ENCODE measurements at regions of chr19 and their contacts with region 1.

Region 1: GRCh38 chr19:15379083-15379995 is at the start of gene AKAP8:
- DNase-seq: peak; percentile 95 to 100 (median 98)
- ATAC-seq: peak; percentile 88
- H3K4me3 ChIP-seq: peak within 1 kb of the TSS; percentile 92 to 96
- H3K4me3 Mint-ChIP-seq: peak within 1 kb of the TSS; percentile 94
- H3K27ac ChIP-seq: peak within 1 kb of the TSS; percentile 98 to 99
- H3K27ac Mint-ChIP-seq: peak within 1 kb of the TSS; percentile 98
- H3K4me1 ChIP-seq: peaks cover 36% of the 10 kb centered on the region
- H3K4me1 Mint-ChIP-seq: peaks cover 40% of the 10 kb centered on the region
- H3K27me3 ChIP-seq: no peaks in the 10 kb centered on the region
- H3K27me3 Mint-ChIP-seq: no peaks in the 10 kb centered on the region
- CTCF ChIP-seq: no peak
- total RNA-seq, gene AKAP8: 97.4 to 109 TPM

Region 2: DNA sequence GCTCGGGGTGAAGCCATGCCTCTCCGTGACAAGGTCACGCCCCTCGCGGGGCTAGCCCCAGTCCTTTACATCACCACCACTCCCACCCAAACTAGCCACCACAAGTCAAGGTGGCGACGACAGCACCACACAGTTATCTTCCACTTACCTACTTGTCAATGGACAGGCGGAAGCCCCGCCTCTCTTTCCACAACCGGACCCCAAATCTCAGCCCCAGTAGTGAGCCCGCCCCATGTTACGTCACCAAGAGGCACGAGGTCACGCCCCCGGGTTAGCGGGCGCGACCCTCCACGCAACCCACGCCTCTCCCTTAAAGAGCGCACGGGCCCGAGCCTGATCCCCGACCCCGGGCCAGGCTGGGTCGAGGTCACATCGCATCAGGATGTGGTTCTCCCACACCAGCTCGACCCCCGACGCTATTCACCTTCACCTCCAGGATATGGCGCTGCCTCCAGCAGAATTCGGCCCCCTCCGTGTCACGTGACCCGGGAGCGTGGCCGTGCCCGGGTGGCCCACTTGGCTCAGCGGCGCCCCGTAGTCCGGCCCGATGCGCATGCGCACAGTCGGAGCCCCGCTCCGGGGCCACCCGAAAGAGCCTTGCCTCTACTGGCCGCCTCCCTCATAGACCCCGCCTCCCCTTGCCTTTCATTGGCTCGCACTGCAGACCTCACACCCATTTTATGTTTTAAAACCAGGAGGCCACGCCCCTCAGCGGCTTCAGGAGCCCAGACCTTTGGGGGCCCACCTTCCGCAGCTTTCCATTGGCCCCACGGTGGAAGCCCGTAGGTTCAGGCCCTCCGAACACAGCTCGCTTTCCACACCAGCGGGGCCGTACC is 253.9 kb before region 1 on chr19:
- CTCF ChIA-PET with region 1: no interaction called
- POLR2A ChIA-PET with region 1: interaction called, 4 read pairs
- intact Hi-C with region 1: loop called (anchors 1 kb)
- DNase-seq: peak; percentile 94 to 99 (median 97)
- ATAC-seq: peak; percentile 85
- H3K4me3 ChIP-seq: peak overlapping the region; percentile 98 to 99
- H3K4me3 Mint-ChIP-seq: peak overlapping the region; percentile 99
- H3K27ac ChIP-seq: peak overlapping the region; percentile 91 to 98
- H3K27ac Mint-ChIP-seq: peak overlapping the region; percentile 98
- H3K4me1 ChIP-seq: peaks cover 34% of the 10 kb centered on the region
- H3K4me1 Mint-ChIP-seq: peaks cover 47% of the 10 kb centered on the region
- H3K27me3 ChIP-seq: no peaks in the 10 kb centered on the region
- H3K27me3 Mint-ChIP-seq: no peaks in the 10 kb centered on the region
- CTCF ChIP-seq: no peak

Region 3: GRCh38 chr19:15264061-15264932 is 115.0 kb before region 1 on chr19:
- CTCF ChIA-PET with region 1: interaction called, 4 read pairs
- POLR2A ChIA-PET with region 1: no interaction called
- intact Hi-C with region 1: loop called (anchors 1 to 2 kb)
- DNase-seq: peak; percentile 46 to 82 (median 72)
- ATAC-seq: peak; percentile 71
- H3K4me3 ChIP-seq: no peak overlapping the region
- H3K4me3 Mint-ChIP-seq: no peak overlapping the region
- H3K27ac ChIP-seq: no peak overlapping the region
- H3K27ac Mint-ChIP-seq: no peak overlapping the region
- H3K4me1 ChIP-seq: no peaks in the 10 kb centered on the region
- H3K4me1 Mint-ChIP-seq: peaks cover 3% of the 10 kb centered on the region
- H3K27me3 ChIP-seq: no peaks in the 10 kb centered on the region
- H3K27me3 Mint-ChIP-seq: no peaks in the 10 kb centered on the region
- CTCF ChIP-seq: peak; percentile 70

Region 4: DNA sequence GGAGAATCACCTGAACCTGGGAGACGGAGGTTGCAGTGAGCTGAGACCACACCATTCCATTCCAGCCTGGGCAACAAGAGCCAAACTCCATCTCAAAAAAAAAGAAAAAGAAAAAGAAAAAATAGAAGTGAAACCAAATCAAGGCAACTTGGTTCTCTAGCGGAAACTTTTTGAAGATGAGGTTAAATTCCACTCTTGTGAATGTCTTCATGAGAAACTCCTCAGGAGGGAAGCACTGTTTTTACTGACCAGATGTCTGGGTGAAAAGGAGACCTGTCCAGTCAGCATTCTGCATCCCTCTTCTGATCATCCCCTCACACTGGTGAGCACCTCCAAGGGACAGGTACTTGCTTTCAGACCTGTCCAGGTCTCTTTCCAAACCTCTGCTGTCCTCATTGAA is 62.8 kb before region 1 on chr19:
- CTCF ChIA-PET with region 1: no interaction called
- POLR2A ChIA-PET with region 1: no interaction called
- intact Hi-C with region 1: no loop called
- DNase-seq: no peak
- ATAC-seq: no peak
- H3K4me3 ChIP-seq: no peak overlapping the region
- H3K4me3 Mint-ChIP-seq: peak overlapping the region; percentile 63
- H3K27ac ChIP-seq: no peak overlapping the region
- H3K27ac Mint-ChIP-seq: peak overlapping the region; percentile 84
- H3K4me1 ChIP-seq: peaks cover 83% of the 10 kb centered on the region
- H3K4me1 Mint-ChIP-seq: peaks cover 84% of the 10 kb centered on the region
- H3K27me3 ChIP-seq: no peaks in the 10 kb centered on the region
- H3K27me3 Mint-ChIP-seq: no peaks in the 10 kb centered on the region
- CTCF ChIP-seq: no peak

Region 5: GRCh38 chr19:15432629-15433518 is 53.5 kb after region 1 on chr19:
- CTCF ChIA-PET with region 1: no interaction called
- POLR2A ChIA-PET with region 1: interaction called, 14 read pairs
- intact Hi-C with region 1: loop called (anchors 1 kb)
- DNase-seq: peak; percentile 85 to 96 (median 91)
- ATAC-seq: peak; percentile 95
- H3K4me3 ChIP-seq: peak overlapping the region; percentile 88 to 100
- H3K4me3 Mint-ChIP-seq: peak overlapping the region; percentile 89
- H3K27ac ChIP-seq: peak overlapping the region; percentile 76 to 79
- H3K27ac Mint-ChIP-seq: peak overlapping the region; percentile 87
- H3K4me1 ChIP-seq: peaks cover 31% of the 10 kb centered on the region
- H3K4me1 Mint-ChIP-seq: peaks cover 26% of the 10 kb centered on the region
- H3K27me3 ChIP-seq: no peaks in the 10 kb centered on the region
- H3K27me3 Mint-ChIP-seq: no peaks in the 10 kb centered on the region
- CTCF ChIP-seq: no peak

Region 6: DNA sequence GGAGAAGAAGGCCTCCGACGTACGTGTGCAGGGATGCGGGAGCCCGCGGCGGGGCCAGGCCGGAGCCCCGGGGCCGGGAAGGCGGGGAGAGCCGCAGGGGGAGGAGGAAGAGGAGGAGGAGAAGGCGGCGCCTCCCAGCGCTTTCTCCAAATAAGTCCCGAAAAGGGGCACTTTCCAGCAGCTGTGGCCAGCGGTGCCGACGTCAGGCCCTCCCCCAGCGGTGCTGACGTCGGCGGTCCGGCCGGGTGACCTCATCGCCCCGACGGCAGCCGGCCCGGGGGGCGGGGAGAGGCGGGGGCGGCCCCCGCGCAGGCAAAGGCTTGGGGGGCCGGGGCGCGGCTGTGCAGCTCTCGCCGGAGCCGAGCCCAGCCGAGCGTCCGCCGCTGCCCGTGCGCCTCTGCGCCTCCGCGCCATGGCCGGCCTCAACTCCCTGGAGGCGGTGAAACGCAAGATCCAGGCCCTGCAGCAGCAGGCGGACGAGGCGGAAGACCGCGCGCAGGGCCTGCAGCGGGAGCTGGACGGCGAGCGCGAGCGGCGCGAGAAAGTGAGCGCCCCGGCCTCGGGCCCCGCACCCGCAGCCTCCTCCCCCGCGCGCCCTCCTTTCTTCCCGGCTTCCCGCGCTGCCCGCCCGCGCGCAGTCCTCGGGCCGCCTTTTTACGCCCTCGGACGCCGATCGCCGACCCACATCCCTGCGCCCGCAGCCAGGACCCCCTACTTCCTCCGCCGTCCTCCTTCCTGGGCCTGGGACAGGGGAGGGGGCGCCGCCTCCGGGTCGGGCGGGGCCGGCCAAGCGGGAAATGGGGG is 697.0 kb after region 1 on chr19 and contains the start of gene TPM4:
- CTCF ChIA-PET with region 1: no interaction called
- POLR2A ChIA-PET with region 1: no interaction called
- intact Hi-C with region 1: loop called in 1 of 2 experiments (anchors 2 kb)
- DNase-seq: peak; percentile 57 to 94 (median 81)
- ATAC-seq: peak; percentile 48
- H3K4me3 ChIP-seq: peak within 1 kb of the TSS; percentile 59 to 79
- H3K4me3 Mint-ChIP-seq: peak within 1 kb of the TSS; percentile 79
- H3K27ac ChIP-seq: peak within 1 kb of the TSS; percentile 64 to 92
- H3K27ac Mint-ChIP-seq: peak within 1 kb of the TSS; percentile 96
- H3K4me1 ChIP-seq: peaks cover 81% of the 10 kb centered on the region
- H3K4me1 Mint-ChIP-seq: peaks cover 74% of the 10 kb centered on the region
- H3K27me3 ChIP-seq: no peaks in the 10 kb centered on the region
- H3K27me3 Mint-ChIP-seq: no peaks in the 10 kb centered on the region
- CTCF ChIP-seq: no peak
- total RNA-seq, gene TPM4: 187 to 199 TPM

Region 7: DNA sequence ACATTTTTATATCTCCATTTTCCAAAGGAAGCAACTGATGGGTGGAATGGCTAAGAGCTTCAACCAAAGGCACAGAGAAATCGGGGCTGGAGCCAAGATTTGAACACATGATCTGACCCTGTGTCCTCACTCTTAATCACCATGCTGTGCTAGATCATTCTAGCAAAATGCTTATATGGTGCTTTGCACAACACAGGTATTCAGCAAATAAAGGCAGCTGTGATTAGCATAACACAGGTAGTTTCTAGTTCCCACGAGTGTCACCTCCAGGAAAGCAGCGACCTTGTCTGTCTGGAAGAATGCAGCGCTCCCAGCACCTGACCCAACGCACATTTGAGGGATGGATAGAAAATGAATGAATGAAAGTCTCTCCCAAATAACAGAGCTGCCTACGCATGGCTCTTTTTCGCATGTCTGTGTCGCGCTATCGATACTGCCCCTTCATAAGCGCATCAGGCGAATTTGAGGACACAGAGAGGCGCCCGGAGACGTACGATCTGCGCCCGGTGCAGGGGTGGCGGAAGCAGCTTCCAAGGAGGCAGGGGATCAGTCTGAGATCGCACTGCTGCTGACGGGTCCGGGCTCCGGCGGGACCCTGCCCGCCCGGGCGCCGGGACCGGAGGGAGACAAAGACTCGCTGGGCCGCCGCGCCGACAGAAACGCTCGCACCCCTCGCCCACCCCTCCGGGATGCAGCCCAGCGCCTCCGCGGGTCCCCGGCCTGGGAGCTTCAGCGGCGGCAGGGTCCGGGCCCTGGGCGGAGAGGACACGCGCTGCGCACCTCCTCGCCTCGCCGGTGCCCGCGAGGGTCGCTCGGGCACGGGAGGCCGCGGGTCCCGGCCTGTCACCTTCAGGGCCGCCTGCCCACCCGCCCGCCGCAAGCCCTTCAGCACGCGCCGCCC is 1091.8 kb after region 1 on chr19:
- CTCF ChIA-PET with region 1: no interaction called
- POLR2A ChIA-PET with region 1: no interaction called
- intact Hi-C with region 1: no loop called
- DNase-seq: peak in 4 of 9 experiments; percentile 20 to 54 (median 39)
- ATAC-seq: peak; percentile 9
- H3K4me3 ChIP-seq: peak overlapping the region; percentile 50 to 69
- H3K4me3 Mint-ChIP-seq: peak overlapping the region; percentile 88
- H3K27ac ChIP-seq: peak overlapping the region in 1 of 2 experiments; percentile 33
- H3K27ac Mint-ChIP-seq: peak overlapping the region; percentile 57
- H3K4me1 ChIP-seq: peaks cover 21% of the 10 kb centered on the region
- H3K4me1 Mint-ChIP-seq: peaks cover 38% of the 10 kb centered on the region
- H3K27me3 ChIP-seq: no peaks in the 10 kb centered on the region
- H3K27me3 Mint-ChIP-seq: peaks cover 2% of the 10 kb centered on the region
- CTCF ChIP-seq: no peak

Measured in CD8-positive, alpha-beta T cell (primary cell).